ENCODE measurements at regions of chr20 and their contacts with region 1.

Region 1: GRCh38 chr20:2692036-2692885 is at the start of gene EBF4:
- DNase-seq: peak; percentile 62
- ATAC-seq: peak; percentile 61
- total RNA-seq, gene EBF4: 2.9 TPM

Region 2: GRCh38 chr20:2663887-2664719 is 28.2 kb before region 1 on chr20 and contains the start of gene IDH3B:
- intact Hi-C with region 1: loop called (anchors 2 kb)
- DNase-seq: peak; percentile 96
- ATAC-seq: peak; percentile 99
- total RNA-seq, gene IDH3B: 277 TPM